Endothelial cell of umbilical vein (primary cell): ENCODE measurements at regions of chr6 and their contacts with region 1.

Region 1: GRCh38 chr6:136289579-136290409 is at the start of gene BCLAF1:
- DNase-seq: peak; percentile 100
- H3K4me3 ChIP-seq: peak within 1 kb of the TSS; percentile 38 to 90 (median 70)
- H3K27ac ChIP-seq: peak within 1 kb of the TSS; percentile 96
- H3K4me1 ChIP-seq: peaks cover 30% of the 10 kb centered on the region
- H3K27me3 ChIP-seq: peaks cover 0 to 3% of the 10 kb centered on the region in 2 experiments
- CTCF ChIP-seq: no peak
- POLR2A ChIP-seq: peak; percentile 98
- total RNA-seq, gene BCLAF1: 151 and 156 TPM in 2 replicates

Region 2: GRCh38 chr6:135497412-135498269 is 792.2 kb before region 1 on chr6 and contains the start of gene AHI1:
- CTCF ChIA-PET with region 1: interaction called, 4 read pairs
- POLR2A ChIA-PET with region 1: interaction called, 11 read pairs
- dilution Hi-C with region 1: no loop called
- intact Hi-C with region 1: loop called (anchors 1 kb)
- DNase-seq: peak; percentile 97
- H3K4me3 ChIP-seq: peak within 1 kb of the TSS; percentile 96 to 98 (median 96)
- H3K27ac ChIP-seq: peak within 1 kb of the TSS; percentile 99
- H3K4me1 ChIP-seq: peaks cover 23% of the 10 kb centered on the region
- H3K27me3 ChIP-seq: no peaks in the 10 kb centered on the region
- CTCF ChIP-seq: peak in 1 of 2 donors; percentile 3
- POLR2A ChIP-seq: peak; percentile 90
- total RNA-seq, gene AHI1: 19.8 and 20.7 TPM in 2 replicates

Region 3: GRCh38 chr6:135962731-135963130 is 327.1 kb before region 1 on chr6:
- CTCF ChIA-PET with region 1: no interaction called
- POLR2A ChIA-PET with region 1: no interaction called
- dilution Hi-C with region 1: no loop called
- intact Hi-C with region 1: no loop called
- DNase-seq: no peak
- H3K4me3 ChIP-seq: no peak overlapping the region
- H3K27ac ChIP-seq: no peak overlapping the region
- H3K4me1 ChIP-seq: no peaks in the 10 kb centered on the region
- H3K27me3 ChIP-seq: no peaks in the 10 kb centered on the region
- CTCF ChIP-seq: no peak
- POLR2A ChIP-seq: no peak

Region 4: DNA sequence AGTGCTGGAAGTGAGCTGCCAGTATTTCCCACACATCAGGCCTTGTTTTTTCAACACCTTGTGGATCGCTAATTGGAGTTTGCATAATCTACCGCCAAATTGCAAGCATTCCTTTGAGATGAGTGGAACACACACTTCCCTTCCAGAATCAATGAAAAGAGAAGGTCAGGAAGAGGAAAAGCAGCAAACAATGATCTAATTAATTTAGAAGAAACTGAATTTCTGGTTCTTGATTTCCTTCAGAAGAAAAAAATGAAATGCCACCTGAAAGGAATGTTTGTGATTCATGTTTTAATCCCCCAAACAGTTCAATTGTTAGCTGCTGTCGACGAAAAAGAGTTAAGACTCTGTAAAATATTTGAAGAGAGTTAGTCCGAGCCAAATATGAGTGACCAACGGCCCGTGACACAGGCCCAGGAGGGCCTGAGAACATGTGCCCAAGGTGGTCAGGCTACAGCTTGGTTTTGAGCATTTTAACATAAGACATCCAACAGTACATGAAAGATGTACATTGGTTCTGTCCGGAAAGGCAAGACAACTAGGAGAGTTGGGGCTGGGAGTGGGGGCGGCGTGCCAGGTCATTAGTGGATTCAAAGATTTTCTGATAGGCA is 222.0 kb before region 1 on chr6:
- CTCF ChIA-PET with region 1: no interaction called
- POLR2A ChIA-PET with region 1: no interaction called
- dilution Hi-C with region 1: no loop called
- intact Hi-C with region 1: loop called (anchors 5 kb)
- DNase-seq: peak; percentile 95
- H3K4me3 ChIP-seq: peak overlapping the region in 1 of 3 experiments; percentile 21
- H3K27ac ChIP-seq: peak overlapping the region; percentile 100
- H3K4me1 ChIP-seq: peaks cover 48% of the 10 kb centered on the region
- H3K27me3 ChIP-seq: no peaks in the 10 kb centered on the region
- CTCF ChIP-seq: no peak
- POLR2A ChIP-seq: peak; percentile 24

Region 5: DNA sequence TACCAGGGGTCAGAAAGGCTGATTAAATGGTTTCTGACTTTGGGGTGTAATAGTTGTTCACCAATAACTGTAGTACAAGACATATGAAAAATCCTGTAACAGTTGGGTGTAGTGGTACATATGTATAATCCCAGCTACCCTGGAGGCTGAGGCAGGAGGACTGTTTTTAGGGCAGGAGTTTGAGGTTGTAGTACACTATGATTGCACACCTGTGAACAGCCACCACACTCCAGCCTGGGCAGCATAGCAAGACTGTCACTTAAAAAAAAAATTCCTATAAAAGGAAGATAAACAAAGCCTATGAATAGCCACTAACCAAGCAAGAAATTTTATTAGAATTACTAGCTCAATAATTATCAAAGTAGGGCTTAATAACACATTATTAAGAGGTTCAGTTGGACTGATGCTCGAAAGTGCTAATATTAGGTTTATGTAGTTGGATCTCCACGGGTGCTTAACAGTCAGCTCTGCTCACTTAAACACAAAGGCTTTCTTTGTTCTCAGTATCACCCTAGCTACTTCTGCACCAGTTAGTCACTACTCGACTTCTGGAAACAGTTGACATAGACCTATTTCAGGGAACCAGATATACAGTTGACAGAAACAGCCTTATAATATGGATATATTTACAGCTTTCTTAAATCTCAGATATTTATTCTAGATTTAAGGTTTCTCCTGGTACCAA is 152.6 kb before region 1 on chr6:
- CTCF ChIA-PET with region 1: no interaction called
- POLR2A ChIA-PET with region 1: no interaction called
- dilution Hi-C with region 1: no loop called
- intact Hi-C with region 1: no loop called
- DNase-seq: no peak
- H3K4me3 ChIP-seq: no peak overlapping the region
- H3K27ac ChIP-seq: no peak overlapping the region
- H3K4me1 ChIP-seq: no peaks in the 10 kb centered on the region
- H3K27me3 ChIP-seq: no peaks in the 10 kb centered on the region
- CTCF ChIP-seq: no peak
- POLR2A ChIP-seq: no peak

Region 6: GRCh38 chr6:136249811-136250685 is 39.7 kb before region 1 on chr6 and contains the start of gene MTFR2:
- CTCF ChIA-PET with region 1: interaction called, 5 read pairs
- POLR2A ChIA-PET with region 1: interaction called, 6 read pairs
- dilution Hi-C with region 1: no loop called
- intact Hi-C with region 1: loop called (anchors 1 kb)
- DNase-seq: peak; percentile 99
- H3K4me3 ChIP-seq: peak within 1 kb of the TSS; percentile 49 to 97 (median 85)
- H3K27ac ChIP-seq: peak within 1 kb of the TSS; percentile 1
- H3K4me1 ChIP-seq: peaks cover 12% of the 10 kb centered on the region
- H3K27me3 ChIP-seq: no peaks in the 10 kb centered on the region
- CTCF ChIP-seq: no peak
- POLR2A ChIP-seq: peak; percentile 74
- total RNA-seq, gene MTFR2: 7.4 and 7.7 TPM in 2 replicates

Region 7: DNA sequence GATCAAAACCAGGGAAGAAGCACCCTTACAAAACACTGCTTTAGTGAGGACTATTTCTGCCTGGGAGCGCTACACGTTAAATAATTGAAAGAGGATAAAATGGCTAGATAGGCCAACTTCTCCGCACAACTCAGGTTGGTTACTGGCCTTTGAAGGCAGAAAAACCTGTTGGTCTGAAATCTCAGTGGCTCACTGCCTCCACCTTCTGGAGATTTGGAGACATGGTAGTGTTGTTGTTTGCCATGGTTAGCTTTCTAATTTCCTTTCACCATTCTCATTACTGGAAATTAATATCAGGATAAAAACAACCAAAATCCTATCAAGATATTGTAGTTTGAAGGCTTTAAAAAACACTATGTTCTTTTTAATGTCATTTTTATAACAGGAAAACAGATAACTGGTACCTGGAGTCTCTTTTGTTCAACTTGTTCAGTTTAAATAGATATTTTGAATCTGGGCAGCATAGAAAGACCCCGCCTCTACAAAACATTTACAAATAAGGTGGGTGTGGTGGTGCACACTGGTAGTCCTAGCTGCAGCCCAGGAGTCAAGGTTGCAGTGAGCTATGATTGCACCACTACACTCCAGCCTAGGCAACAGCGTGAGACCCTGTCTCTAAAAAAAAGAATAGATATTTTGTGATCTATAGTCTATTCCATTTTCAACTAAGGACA is 27.4 kb after region 1 on chr6:
- CTCF ChIA-PET with region 1: interaction called, 28 read pairs
- POLR2A ChIA-PET with region 1: interaction called, 3 read pairs
- dilution Hi-C with region 1: no loop called
- intact Hi-C with region 1: no loop called
- DNase-seq: peak; percentile 59
- H3K4me3 ChIP-seq: no peak overlapping the region
- H3K27ac ChIP-seq: no peak overlapping the region
- H3K4me1 ChIP-seq: no peaks in the 10 kb centered on the region
- H3K27me3 ChIP-seq: peaks cover 5 to 7% of the 10 kb centered on the region in 2 experiments
- CTCF ChIP-seq: peak; percentile 69 to 74
- POLR2A ChIP-seq: no peak

Region 8: GRCh38 chr6:136822376-136823127 is 532.8 kb after region 1 on chr6 and contains the start of gene PEX7:
- CTCF ChIA-PET with region 1: no interaction called
- POLR2A ChIA-PET with region 1: no interaction called
- dilution Hi-C with region 1: no loop called
- intact Hi-C with region 1: loop called (anchors 10 kb)
- DNase-seq: peak; percentile 92
- H3K4me3 ChIP-seq: peak within 1 kb of the TSS; percentile 35 to 89 (median 65)
- H3K27ac ChIP-seq: peak within 1 kb of the TSS; percentile 52
- H3K4me1 ChIP-seq: peaks cover 10% of the 10 kb centered on the region
- H3K27me3 ChIP-seq: no peaks in the 10 kb centered on the region
- CTCF ChIP-seq: peak; percentile 67 to 86
- POLR2A ChIP-seq: peak; percentile 73
- total RNA-seq, gene PEX7: 3.5 and 3.7 TPM in 2 replicates

Region 9: GRCh38 chr6:137224799-137225198 is 935.0 kb after region 1 on chr6:
- CTCF ChIA-PET with region 1: no interaction called
- POLR2A ChIA-PET with region 1: no interaction called
- dilution Hi-C with region 1: no loop called
- intact Hi-C with region 1: loop called (anchors 5 kb)
- DNase-seq: no peak
- H3K4me3 ChIP-seq: no peak overlapping the region
- H3K27ac ChIP-seq: no peak overlapping the region
- H3K4me1 ChIP-seq: peaks cover 25% of the 10 kb centered on the region
- H3K27me3 ChIP-seq: no peaks in the 10 kb centered on the region
- CTCF ChIP-seq: no peak
- POLR2A ChIP-seq: no peak